BJ (cell line): ENCODE measurements at regions of chr10 and their contacts with region 1.

Region 1: DNA sequence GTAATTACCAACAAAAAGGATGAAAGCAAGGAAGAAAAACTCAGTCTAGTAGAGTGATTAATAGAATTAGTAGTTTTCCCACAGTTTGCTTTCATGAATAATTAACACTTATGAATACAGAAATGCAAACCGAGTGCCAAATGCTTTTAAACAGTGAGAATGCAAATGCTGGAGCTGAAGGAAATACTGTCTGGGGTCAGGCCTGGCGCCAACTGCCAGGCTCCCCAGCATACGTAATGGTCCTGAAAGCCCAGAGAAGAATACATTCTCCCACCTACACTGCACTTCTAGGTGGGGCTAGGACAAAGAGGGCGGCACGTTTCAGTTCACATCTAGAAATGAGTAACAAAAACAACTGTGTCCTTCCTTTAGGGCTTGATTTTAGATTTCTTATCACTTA is 30.0 kb downstream of the GLUD1 start:
- DNase-seq: no peak
- H3K4me3 ChIP-seq: no peak overlapping the region
- H3K27me3 ChIP-seq: no peaks in the 10 kb centered on the region
- CTCF ChIP-seq: no peak

Region 2: GRCh38 chr10:86730227-86730626 is 334.4 kb before region 1 on chr10:
- CTCF ChIA-PET with region 1: no interaction called
- POLR2A ChIA-PET with region 1: no interaction called
- DNase-seq: no peak
- H3K4me3 ChIP-seq: no peak overlapping the region
- H3K27me3 ChIP-seq: peaks cover 1% of the 10 kb centered on the region; the same call in 1 of the 2 replicates
- CTCF ChIP-seq: no peak

Region 3: DNA sequence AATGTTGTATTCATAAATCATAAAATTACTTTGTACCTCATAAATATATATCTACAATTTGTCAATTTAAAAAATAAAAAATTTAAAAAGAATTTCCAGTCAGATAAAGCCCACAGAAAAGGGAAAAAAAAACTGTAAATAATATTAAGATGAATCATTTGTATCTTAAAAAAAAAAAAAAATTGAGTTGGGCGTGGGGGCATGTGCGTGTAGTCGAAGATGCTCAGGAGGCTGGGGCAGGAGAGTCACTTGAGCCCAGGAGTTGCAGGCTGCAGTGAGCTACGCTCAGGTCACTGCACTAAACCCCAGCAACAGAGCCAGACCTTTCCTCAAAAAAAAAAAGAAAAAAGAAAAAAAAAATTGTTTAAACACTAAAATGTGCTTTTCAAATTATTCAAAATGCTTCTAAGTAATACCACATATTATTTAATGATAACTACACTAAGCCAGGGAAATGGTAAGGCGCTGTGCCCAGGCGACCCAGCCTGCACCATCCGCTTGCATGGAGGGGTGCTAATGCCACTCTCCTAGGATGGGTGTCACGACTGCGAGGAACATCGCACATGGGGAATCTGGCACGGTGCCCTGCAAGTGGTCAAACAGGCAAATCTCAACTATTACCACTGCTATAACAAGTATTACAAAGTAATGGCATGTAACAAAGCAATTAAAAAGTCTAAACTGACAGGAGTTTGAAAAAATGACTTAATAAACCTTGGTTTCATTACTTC is 14.6 kb after region 1 on chr10:
- CTCF ChIA-PET with region 1: interaction called, 3 read pairs
- POLR2A ChIA-PET with region 1: interaction called, 16 read pairs
- DNase-seq: no peak
- H3K4me3 ChIP-seq: no peak overlapping the region
- H3K27me3 ChIP-seq: no peaks in the 10 kb centered on the region
- CTCF ChIP-seq: no peak

Region 4: GRCh38 chr10:87593702-87594101 is 529.1 kb after region 1 on chr10:
- CTCF ChIA-PET with region 1: no interaction called
- POLR2A ChIA-PET with region 1: interaction called, 33 read pairs
- DNase-seq: peak; percentile 63
- H3K4me3 ChIP-seq: no peak overlapping the region
- H3K27me3 ChIP-seq: peaks cover 2% of the 10 kb centered on the region; the same call in 1 of the 2 replicates
- CTCF ChIP-seq: no peak